ENCODE measurements at regions of chr7 and their contacts with region 1.

Region 1: GRCh38 chr7:74294191-74294998 is 5.2 kb downstream of the CLIP2 start:
- DNase-seq: no peak
- CTCF ChIP-seq: no peak

Region 2: GRCh38 chr7:73482746-73483145 is 811.6 kb before region 1 on chr7:
- CTCF ChIA-PET with region 1: no interaction called
- POLR2A ChIA-PET with region 1: interaction called, 10 read pairs
- DNase-seq: no peak
- CTCF ChIP-seq: no peak